ENCODE measurements at regions of chr13 and their contacts with region 1.

Region 1: GRCh38 chr13:27977476-27978300 is 8.6 kb upstream of the CDX2 start:
- DNase-seq: no peak
- H3K4me3 ChIP-seq: no peak overlapping the region
- CTCF ChIP-seq: no peak

Region 2: GRCh38 chr13:27374650-27375049 is 603.0 kb before region 1 on chr13:
- CTCF ChIA-PET with region 1: interaction called, 78 read pairs
- POLR2A ChIA-PET with region 1: no interaction called
- DNase-seq: peak; percentile 40
- H3K4me3 ChIP-seq: no peak overlapping the region
- CTCF ChIP-seq: peak; percentile 76

Region 3: DNA sequence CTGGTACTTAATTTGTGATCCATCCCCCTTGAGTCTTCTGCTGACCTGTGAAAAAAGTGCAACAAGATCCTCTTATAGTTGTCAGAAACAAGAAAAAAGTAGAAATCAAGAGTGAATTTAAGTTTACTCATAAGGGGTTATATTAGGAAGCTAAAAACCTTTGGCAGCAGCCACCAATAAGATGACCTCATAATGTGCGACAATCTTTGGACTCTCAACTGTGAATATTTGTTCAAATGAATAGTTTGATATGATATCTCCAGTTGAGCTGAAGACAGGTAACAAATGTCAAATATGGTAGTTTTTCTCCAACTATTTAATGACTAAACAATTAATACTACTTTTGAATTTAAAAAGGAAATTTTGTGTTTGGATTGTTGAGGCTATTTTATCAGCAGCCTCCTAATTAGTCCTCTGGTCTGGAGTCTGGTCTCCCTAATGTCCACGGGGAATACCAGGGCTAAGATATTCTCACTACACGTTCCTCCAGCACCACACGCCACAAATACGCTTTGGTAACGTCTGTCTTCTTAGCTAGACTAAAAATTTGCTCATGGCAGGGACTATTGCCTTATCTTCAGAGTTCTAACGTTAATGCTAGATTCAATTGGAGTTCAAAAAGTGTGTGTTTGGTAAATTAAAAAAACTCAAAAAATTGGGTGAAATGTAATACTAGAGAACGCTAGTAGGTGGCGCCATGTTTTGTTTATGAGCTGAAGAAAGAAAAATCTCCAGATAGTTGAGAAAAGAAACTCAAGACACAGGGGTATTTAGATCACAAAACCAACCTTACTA is 108.8 kb before region 1 on chr13:
- CTCF ChIA-PET with region 1: interaction called, 36 read pairs
- POLR2A ChIA-PET with region 1: no interaction called
- DNase-seq: no peak
- H3K4me3 ChIP-seq: no peak overlapping the region
- CTCF ChIP-seq: peak; percentile 30

Region 4: DNA sequence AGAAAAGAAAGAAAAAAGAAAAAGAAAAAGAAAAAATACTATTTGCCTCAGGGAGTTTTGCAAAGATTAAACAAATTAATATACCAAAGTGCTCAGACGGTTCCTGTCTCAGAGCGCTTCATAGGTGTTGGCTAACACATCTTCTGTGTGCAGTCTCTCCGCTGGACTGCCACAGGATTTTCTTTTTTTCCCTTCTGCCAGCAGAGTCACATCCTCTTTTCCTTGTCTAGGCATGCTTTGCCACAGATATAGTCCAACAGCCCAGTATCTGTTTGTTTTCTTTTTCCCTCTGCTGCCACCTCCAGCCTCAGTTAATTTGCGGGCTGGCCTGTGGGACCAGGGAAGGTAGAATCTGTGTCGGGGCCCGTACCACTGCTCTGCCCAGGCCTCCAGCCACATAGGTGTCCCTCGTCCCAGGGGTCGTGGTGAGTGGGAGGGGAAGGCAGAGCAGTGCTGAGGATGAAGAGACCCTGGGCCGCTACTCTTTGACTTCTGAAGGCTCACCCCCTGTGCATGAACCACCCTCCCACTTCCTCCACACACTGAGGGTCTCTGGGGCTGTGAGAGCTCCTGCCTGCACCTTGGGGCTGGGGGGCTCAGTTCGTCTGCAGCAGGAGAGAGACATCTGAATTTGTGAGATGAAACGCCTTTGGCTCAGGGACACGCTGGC is 14.3 kb after region 1 on chr13:
- CTCF ChIA-PET with region 1: interaction called, 26 read pairs
- POLR2A ChIA-PET with region 1: no interaction called
- DNase-seq: no peak
- H3K4me3 ChIP-seq: no peak overlapping the region
- CTCF ChIP-seq: no peak